Mammary epithelial cell (primary cell): ENCODE measurements at regions of chr9 and their contacts with region 1.

Region 1: GRCh38 chr9:100028201-100028784 is 70.5 kb downstream of the ERP44 start:
- DNase-seq: peak; percentile 53
- H3K4me3 ChIP-seq: no peak overlapping the region
- H3K27ac ChIP-seq: no peak overlapping the region
- H3K4me1 ChIP-seq: no peaks in the 10 kb centered on the region
- H3K27me3 ChIP-seq: no peaks in the 10 kb centered on the region
- CTCF ChIP-seq: peak; percentile 95 to 97

Region 2: GRCh38 chr9:99962680-99963261 is 65.5 kb before region 1 on chr9:
- CTCF ChIA-PET with region 1: no interaction called
- dilution Hi-C with region 1: no loop called
- in situ Hi-C with region 1: no loop called
- intact Hi-C with region 1: no loop called
- DNase-seq: peak; percentile 7
- H3K4me3 ChIP-seq: no peak overlapping the region
- H3K27ac ChIP-seq: no peak overlapping the region
- H3K4me1 ChIP-seq: peaks cover 11% of the 10 kb centered on the region
- H3K27me3 ChIP-seq: no peaks in the 10 kb centered on the region
- CTCF ChIP-seq: no peak

Region 3: DNA sequence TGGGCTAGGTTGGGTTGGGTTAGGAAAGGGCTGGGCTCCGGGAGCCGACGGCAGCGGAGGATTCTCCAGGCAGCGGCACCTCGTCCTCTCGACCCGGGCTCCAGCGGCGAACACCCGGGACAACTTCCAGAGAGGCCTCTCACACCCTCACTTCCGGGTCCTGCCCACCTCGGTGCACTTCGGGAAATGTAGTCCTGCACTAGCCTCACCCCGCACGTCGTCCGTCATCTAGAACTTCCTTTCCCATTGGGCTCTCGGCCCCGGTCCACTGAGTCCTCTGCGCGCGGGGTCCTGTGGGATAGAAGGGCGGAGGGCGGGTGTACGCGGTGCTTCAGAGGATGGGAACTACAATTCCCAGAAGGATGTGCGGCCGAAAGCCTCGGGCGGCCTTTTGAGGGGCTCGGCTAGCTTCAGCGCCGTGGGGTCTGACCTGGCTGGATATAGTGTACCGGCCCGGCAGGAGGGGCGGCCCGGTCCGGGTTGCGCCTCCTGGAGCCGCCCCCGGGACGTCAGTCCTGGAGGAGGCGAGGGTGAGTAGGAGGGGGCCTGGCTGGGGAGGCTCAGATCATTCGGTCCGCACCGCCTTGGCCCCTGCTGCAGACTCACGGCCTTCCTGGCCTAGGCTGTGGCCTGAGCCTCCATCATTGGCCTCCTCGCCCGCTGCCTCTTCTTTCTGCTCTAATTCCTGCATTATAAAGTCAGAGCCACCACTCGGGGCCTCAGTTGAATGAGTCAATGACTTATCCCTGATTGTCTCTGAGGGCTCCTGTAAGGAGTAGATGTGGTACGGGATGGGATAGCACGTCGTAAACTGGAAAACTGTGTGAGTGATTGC is 70.8 kb after region 1 on chr9 and contains the starts of genes ERP44 and INVS:
- CTCF ChIA-PET with region 1: no interaction called
- dilution Hi-C with region 1: no loop called
- in situ Hi-C with region 1: no loop called
- intact Hi-C with region 1: loop called (anchors 2 kb)
- DNase-seq: peak; percentile 99
- H3K4me3 ChIP-seq: peak within 1 kb of the TSS; percentile 77 to 95 (median 86)
- H3K27ac ChIP-seq: peak within 1 kb of the TSS; percentile 68
- H3K4me1 ChIP-seq: peaks cover 8% of the 10 kb centered on the region
- H3K27me3 ChIP-seq: no peaks in the 10 kb centered on the region
- CTCF ChIP-seq: no peak
- total RNA-seq, gene ERP44: 11.0 to 16.9 TPM
- total RNA-seq, gene INVS: 21.0 to 22.8 TPM

Region 4: GRCh38 chr9:100222674-100223073 is 194.4 kb after region 1 on chr9:
- CTCF ChIA-PET with region 1: no interaction called
- dilution Hi-C with region 1: no loop called
- in situ Hi-C with region 1: loop called (anchors 10 to 25 kb)
- intact Hi-C with region 1: loop called (anchors 1 kb)
- DNase-seq: peak; percentile 17
- H3K4me3 ChIP-seq: no peak overlapping the region
- H3K27ac ChIP-seq: no peak overlapping the region
- H3K4me1 ChIP-seq: no peaks in the 10 kb centered on the region
- H3K27me3 ChIP-seq: no peaks in the 10 kb centered on the region
- CTCF ChIP-seq: peak; percentile 21 to 45

Region 5: GRCh38 chr9:100322954-100323536 is 294.8 kb after region 1 on chr9:
- CTCF ChIA-PET with region 1: no interaction called
- dilution Hi-C with region 1: no loop called
- in situ Hi-C with region 1: no loop called
- intact Hi-C with region 1: loop called (anchors 2 kb)
- DNase-seq: peak; percentile 20
- H3K4me3 ChIP-seq: no peak overlapping the region
- H3K27ac ChIP-seq: no peak overlapping the region
- H3K4me1 ChIP-seq: peaks cover 3% of the 10 kb centered on the region
- H3K27me3 ChIP-seq: no peaks in the 10 kb centered on the region
- CTCF ChIP-seq: peak; percentile 59 to 63